Activated T-helper 2 cell treated with anti-CD3 and anti-CD28 coated beads, Interferon-gamma antibody, Interleukin-2, Interleukin-4, amounts not matched to agents 10 μg/mL and 5 μg/mL and 100 μg/mL, durations not matched to agents 14 hours and 24 hours and 36 hours (primary cell): ENCODE measurements at regions of chr3 and their contacts with region 1.

Region 1: GRCh38 chr3:119240591-119241434 is at the start of gene B4GALT4:
- DNase-seq: peak; percentile 74
- H3K4me3 Mint-ChIP-seq: peak within 1 kb of the TSS; percentile 84
- H3K27ac Mint-ChIP-seq: peak within 1 kb of the TSS; percentile 85
- H3K4me1 Mint-ChIP-seq: peaks cover 27% of the 10 kb centered on the region
- H3K27me3 Mint-ChIP-seq: no peaks in the 10 kb centered on the region
- total RNA-seq, gene B4GALT4: 17.2 and 20.1 TPM in 2 replicates

Region 2: GRCh38 chr3:118884748-118885206 is 356.0 kb before region 1 on chr3:
- intact Hi-C with region 1: loop called (anchors 1 kb)
- DNase-seq: peak; percentile 52
- H3K4me3 Mint-ChIP-seq: no peak overlapping the region
- H3K27ac Mint-ChIP-seq: no peak overlapping the region
- H3K4me1 Mint-ChIP-seq: no peaks in the 10 kb centered on the region
- H3K27me3 Mint-ChIP-seq: peaks cover 16% of the 10 kb centered on the region

Region 3: GRCh38 chr3:119098619-119099222 is 142.1 kb before region 1 on chr3:
- intact Hi-C with region 1: loop called (anchors 2 kb)
- DNase-seq: no peak
- H3K4me3 Mint-ChIP-seq: no peak overlapping the region
- H3K27ac Mint-ChIP-seq: no peak overlapping the region
- H3K4me1 Mint-ChIP-seq: no peaks in the 10 kb centered on the region
- H3K27me3 Mint-ChIP-seq: peaks cover 4% of the 10 kb centered on the region

Region 4: DNA sequence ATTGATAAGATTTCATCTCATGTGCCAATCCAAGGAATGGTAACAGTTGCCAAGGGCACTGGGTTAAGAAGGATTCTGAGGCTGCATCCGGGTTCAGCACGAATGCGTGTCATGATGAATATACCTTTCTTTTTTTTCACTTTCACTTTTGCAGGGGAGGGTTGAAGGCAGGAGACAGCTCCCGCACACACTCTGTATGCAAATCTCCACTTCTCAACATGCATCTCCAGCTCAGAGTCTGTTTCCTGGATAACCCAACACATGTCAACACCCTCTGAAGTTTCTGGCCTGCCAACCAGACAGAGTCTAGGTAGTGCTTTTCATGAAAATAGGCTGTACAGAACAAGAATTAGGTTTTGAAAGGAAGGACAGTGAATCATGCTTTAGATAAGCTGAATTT is 21.7 kb before region 1 on chr3:
- intact Hi-C with region 1: loop called (anchors 1 kb)
- DNase-seq: peak; percentile 33
- H3K4me3 Mint-ChIP-seq: peak overlapping the region; percentile 14
- H3K27ac Mint-ChIP-seq: peak overlapping the region; percentile 73
- H3K4me1 Mint-ChIP-seq: peaks cover 12% of the 10 kb centered on the region
- H3K27me3 Mint-ChIP-seq: no peaks in the 10 kb centered on the region

Region 5: GRCh38 chr3:119322835-119323722 is 82.3 kb after region 1 on chr3:
- intact Hi-C with region 1: loop called (anchors 2 kb)
- DNase-seq: peak; percentile 87
- H3K4me3 Mint-ChIP-seq: peak overlapping the region; percentile 77
- H3K27ac Mint-ChIP-seq: peak overlapping the region; percentile 83
- H3K4me1 Mint-ChIP-seq: peaks cover 47% of the 10 kb centered on the region
- H3K27me3 Mint-ChIP-seq: peaks cover 2% of the 10 kb centered on the region

Region 6: GRCh38 chr3:119498186-119498987 is 257.6 kb after region 1 on chr3 and contains the start of gene TIMMDC1:
- intact Hi-C with region 1: loop called (anchors 5 kb)
- DNase-seq: peak; percentile 96
- H3K4me3 Mint-ChIP-seq: peak within 1 kb of the TSS; percentile 96
- H3K27ac Mint-ChIP-seq: peak within 1 kb of the TSS; percentile 95
- H3K4me1 Mint-ChIP-seq: peaks cover 32% of the 10 kb centered on the region
- H3K27me3 Mint-ChIP-seq: no peaks in the 10 kb centered on the region
- total RNA-seq, gene TIMMDC1: 93.6 and 101 TPM in 2 replicates

Region 7: DNA sequence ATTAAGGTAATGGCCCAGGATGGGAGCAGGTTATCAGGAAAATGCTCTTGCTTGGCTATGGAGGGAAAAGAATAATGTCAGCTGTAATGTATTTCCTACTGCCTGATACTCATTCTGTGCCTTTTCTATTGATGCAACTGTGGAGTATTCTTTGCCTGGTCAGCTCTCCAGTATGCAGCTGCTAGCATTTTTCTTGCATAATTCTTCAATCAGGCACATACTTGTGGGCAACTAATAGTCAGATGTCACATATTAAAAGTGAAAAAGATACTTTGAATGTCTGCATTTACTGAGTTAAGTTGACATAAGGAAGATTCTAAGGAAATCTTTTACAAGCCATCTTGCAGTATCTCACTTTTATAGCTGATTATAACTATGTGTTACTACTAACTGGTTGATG is 289.1 kb after region 1 on chr3:
- intact Hi-C with region 1: no loop called
- DNase-seq: no peak
- H3K4me3 Mint-ChIP-seq: no peak overlapping the region
- H3K27ac Mint-ChIP-seq: no peak overlapping the region
- H3K4me1 Mint-ChIP-seq: peaks cover 4% of the 10 kb centered on the region
- H3K27me3 Mint-ChIP-seq: no peaks in the 10 kb centered on the region

Region 8: GRCh38 chr3:119676771-119677640 is 436.2 kb after region 1 on chr3 and contains the start of gene COX17:
- intact Hi-C with region 1: loop called (anchors 2 kb)
- DNase-seq: peak; percentile 96
- H3K4me3 Mint-ChIP-seq: peak within 1 kb of the TSS; percentile 96
- H3K27ac Mint-ChIP-seq: peak within 1 kb of the TSS; percentile 94
- H3K4me1 Mint-ChIP-seq: peaks cover 36% of the 10 kb centered on the region
- H3K27me3 Mint-ChIP-seq: no peaks in the 10 kb centered on the region
- total RNA-seq, gene COX17: 61.2 and 64.9 TPM in 2 replicates